Spleen (tissue), 13 donors: ENCODE measurements at regions of chr7 and their contacts with region 1.

Region 1: DNA sequence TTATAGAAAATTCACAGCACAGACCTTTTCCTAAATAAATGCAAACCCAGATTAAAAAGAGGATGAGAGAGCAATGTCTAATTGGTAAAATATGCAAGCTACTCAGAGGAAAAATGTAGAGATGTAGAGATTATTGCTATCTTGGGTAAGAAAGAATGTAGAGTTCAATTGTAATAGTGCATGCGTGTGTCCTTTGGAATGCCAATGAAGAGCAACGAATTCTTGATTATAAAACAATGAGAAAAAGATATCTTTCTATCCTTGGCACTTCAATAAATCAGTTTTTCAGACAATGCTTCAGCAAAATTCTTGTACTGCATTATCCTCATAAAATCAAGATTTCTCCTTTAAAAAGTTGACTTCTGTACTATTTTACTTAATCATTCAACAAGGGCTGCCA is 50.9 kb downstream of the SEMA3D start:
- DNase-seq: no peak
- H3K4me3 ChIP-seq: no peak overlapping the region
- H3K27ac ChIP-seq: no peak overlapping the region
- H3K4me1 ChIP-seq: no peaks in the 10 kb centered on the region
- H3K27me3 ChIP-seq: no peaks in the 10 kb centered on the region
- CTCF ChIP-seq: no peak
- POLR2A ChIP-seq: no peak

Region 2: DNA sequence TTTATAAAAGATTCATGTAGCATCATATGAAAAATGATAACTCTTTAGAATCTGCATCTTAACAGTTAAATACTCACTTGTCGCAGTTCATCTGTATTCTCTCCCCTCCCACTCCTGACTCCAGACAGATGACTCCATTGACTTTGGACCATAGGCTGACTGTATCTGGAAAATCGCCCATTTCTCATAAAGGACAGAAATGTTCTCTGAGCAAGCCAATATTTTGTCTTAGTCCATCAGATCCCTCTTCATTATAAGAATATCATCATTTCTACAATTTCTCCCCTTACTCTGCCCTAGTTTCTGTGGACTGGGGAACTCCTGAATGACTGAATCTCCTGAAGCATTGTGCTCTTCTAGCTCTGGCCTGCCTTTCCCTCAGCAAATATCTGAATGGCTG is 74.5 kb before region 1 on chr7:
- intact Hi-C with region 1: loop called (anchors 2 kb)
- DNase-seq: no peak
- H3K4me3 ChIP-seq: no peak overlapping the region
- H3K27ac ChIP-seq: peak overlapping the region in 7 of 8 donors; percentile 3 to 75 (median 51)
- H3K4me1 ChIP-seq: peaks cover 0 to 6% (median 0%) of the 10 kb centered on the region in 6 donors
- H3K27me3 ChIP-seq: no peaks in the 10 kb centered on the region
- CTCF ChIP-seq: no peak
- POLR2A ChIP-seq: no peak